ENCODE measurements at regions of chr10 and their contacts with region 1.

Region 1: DNA sequence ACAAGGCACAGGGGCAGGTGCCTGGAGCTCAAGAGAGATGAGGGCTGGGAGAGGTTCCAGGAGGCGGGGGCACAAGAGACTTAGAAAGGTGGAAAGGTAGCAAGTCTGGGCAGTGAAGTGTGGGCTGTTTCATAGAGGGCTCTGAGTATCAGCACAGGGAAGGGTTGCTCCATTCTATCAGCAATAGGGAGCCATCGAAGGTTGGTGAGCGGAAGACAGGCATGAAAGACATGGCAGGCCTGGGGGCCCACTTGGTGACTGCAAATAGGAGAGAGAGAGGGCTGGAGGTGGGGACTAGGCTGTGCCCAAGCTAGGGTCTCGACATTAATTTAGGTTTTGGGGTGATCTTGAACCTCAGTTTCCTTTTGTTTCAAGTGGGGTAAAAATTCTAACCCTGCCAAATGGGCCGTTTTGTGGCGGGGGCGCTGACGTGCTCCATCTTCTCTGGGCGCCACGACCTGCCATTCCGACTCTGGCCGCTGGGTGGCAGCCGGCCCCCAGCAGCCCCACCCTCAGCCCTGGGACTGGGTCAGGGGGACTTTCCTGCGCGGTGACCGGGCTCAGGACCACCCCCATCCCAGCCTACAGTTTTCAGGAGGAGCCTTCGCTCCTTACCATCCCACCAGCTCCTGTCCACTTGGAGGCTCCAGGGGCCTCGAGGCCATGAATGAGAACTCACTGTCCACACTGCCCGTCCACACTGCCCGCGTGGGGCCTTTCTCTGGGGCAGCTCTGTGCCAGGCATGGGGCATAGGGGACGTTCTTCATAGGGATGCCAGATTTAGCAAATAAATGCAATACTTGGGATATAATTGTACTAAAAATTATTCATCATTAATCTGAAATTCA is 37.2 kb upstream of the PCBD1 start:
- DNase-seq: peak; percentile 28 to 46 (median 43)
- H3K4me3 ChIP-seq: no peak overlapping the region
- H3K27ac ChIP-seq: no peak overlapping the region
- H3K4me1 ChIP-seq: no peaks in the 10 kb centered on the region
- H3K27me3 ChIP-seq: no peaks in the 10 kb centered on the region

Region 2: GRCh38 chr10:70903262-70903921 is 22.2 kb before region 1 on chr10:
- CTCF ChIA-PET with region 1: interaction called, 57 read pairs
- POLR2A ChIA-PET with region 1: no interaction called
- DNase-seq: peak; percentile 41 to 61 (median 57)
- H3K4me3 ChIP-seq: no peak overlapping the region
- H3K27ac ChIP-seq: no peak overlapping the region
- H3K4me1 ChIP-seq: no peaks in the 10 kb centered on the region
- H3K27me3 ChIP-seq: no peaks in the 10 kb centered on the region

Region 3: DNA sequence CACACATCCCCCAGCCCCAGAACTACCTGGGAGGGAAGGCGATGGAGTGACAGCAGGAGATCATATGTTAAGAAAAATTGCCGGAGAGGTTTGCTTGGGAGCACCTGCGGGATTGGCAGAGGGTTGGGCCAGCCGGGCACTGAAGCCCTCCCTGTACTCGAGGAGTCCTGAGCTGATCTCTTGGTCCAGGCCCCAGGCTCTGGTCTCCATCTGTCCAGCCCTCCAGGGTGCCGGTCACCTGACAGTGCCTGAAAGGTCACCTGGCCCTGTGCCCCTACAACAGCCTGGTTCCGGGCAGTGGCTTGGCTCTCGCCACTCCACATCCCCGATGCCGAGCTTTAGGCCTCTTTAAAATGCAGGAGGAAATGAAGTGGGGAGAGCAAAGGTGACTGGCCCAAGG is 10.0 kb after region 1 on chr10:
- CTCF ChIA-PET with region 1: interaction called, 21 read pairs
- POLR2A ChIA-PET with region 1: interaction called, 7 read pairs
- DNase-seq: no peak
- H3K4me3 ChIP-seq: no peak overlapping the region
- H3K27ac ChIP-seq: no peak overlapping the region
- H3K4me1 ChIP-seq: peaks cover 0 to 8% (median 5%) of the 10 kb centered on the region in 4 experiments
- H3K27me3 ChIP-seq: peaks cover 0 to 1% (median 0%) of the 10 kb centered on the region in 5 experiments

Region 4: GRCh38 chr10:71064413-71065118 is 139.0 kb after region 1 on chr10:
- CTCF ChIA-PET with region 1: interaction called, 11 read pairs
- POLR2A ChIA-PET with region 1: no interaction called
- DNase-seq: peak in 1 of 3 donors; percentile 15
- H3K4me3 ChIP-seq: no peak overlapping the region
- H3K27ac ChIP-seq: no peak overlapping the region
- H3K4me1 ChIP-seq: peaks cover 0 to 33% (median 1%) of the 10 kb centered on the region in 4 experiments
- H3K27me3 ChIP-seq: no peaks in the 10 kb centered on the region

Region 5: GRCh38 chr10:71205468-71205867 is 279.9 kb after region 1 on chr10:
- CTCF ChIA-PET with region 1: interaction called, 31 read pairs
- POLR2A ChIA-PET with region 1: no interaction called
- DNase-seq: no peak
- H3K4me3 ChIP-seq: no peak overlapping the region
- H3K27ac ChIP-seq: no peak overlapping the region
- H3K4me1 ChIP-seq: peaks cover 0 to 6% (median 0%) of the 10 kb centered on the region in 4 experiments
- H3K27me3 ChIP-seq: peaks cover 0 to 17% (median 10%) of the 10 kb centered on the region in 5 experiments

Region 6: DNA sequence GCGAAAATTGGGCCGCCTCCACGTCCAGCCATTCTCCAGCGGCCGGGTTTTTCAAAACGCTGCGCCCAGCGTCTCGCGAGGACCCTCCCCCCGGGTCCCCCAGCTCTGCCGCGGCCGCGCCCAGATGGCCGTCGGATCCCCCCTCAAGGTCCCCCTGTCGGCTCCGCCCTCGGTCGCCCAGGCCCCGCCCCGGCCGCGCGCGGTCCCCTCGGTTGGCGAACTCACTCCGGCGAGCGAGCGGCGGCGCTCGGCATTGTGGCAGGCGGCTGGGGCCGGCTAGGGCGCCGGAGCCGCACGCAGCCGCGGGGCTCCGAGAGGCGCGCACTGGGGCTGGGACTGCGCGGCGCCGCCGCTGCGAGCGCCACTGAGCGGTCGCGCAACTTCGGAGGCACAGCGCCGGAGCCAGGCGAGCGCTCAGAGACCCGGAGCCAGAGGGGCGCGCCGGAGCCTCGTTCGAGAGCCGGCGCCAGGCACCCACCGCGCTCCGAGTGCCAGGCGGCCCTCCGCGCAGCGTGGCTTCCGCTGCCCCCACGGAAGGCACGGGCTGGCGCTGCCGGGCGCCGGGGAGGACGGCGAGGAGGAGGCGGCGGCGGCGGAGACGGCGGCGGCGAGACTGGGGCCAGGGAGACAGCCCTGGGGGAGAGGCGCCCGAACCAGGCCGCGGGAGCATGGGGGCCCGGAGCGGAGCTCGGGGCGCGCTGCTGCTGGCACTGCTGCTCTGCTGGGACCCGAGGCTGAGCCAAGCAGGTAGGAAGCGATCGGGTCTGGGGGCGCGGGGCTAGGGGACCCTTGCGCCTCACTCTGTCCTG is 286.9 kb after region 1 on chr10 and contains the start of gene UNC5B:
- CTCF ChIA-PET with region 1: interaction called, 31 read pairs
- POLR2A ChIA-PET with region 1: no interaction called
- DNase-seq: peak; percentile 77 to 90 (median 89)
- H3K4me3 ChIP-seq: peak within 1 kb of the TSS; percentile 36 to 75 (median 65)
- H3K27ac ChIP-seq: no peak within 1 kb of the TSS
- H3K4me1 ChIP-seq: peaks cover 0 to 38% (median 30%) of the 10 kb centered on the region in 4 experiments
- H3K27me3 ChIP-seq: peaks cover 0 to 56% (median 34%) of the 10 kb centered on the region in 5 experiments